ENCODE measurements at regions of chr2 and their contacts with region 1.

Region 1: GRCh38 chr2:100104718-100105677 is 37.4 kb downstream of the AFF3 start:
- DNase-seq: peak in 1 of 2 donors; percentile 78
- ATAC-seq: peak; percentile 32
- H3K4me3 ChIP-seq: peak overlapping the region; percentile 91 to 98
- H3K27ac ChIP-seq: no peak overlapping the region
- H3K4me1 ChIP-seq: peaks cover 0 to 3% of the 10 kb centered on the region in 2 donors
- H3K27me3 ChIP-seq: no peaks in the 10 kb centered on the region

Region 2: DNA sequence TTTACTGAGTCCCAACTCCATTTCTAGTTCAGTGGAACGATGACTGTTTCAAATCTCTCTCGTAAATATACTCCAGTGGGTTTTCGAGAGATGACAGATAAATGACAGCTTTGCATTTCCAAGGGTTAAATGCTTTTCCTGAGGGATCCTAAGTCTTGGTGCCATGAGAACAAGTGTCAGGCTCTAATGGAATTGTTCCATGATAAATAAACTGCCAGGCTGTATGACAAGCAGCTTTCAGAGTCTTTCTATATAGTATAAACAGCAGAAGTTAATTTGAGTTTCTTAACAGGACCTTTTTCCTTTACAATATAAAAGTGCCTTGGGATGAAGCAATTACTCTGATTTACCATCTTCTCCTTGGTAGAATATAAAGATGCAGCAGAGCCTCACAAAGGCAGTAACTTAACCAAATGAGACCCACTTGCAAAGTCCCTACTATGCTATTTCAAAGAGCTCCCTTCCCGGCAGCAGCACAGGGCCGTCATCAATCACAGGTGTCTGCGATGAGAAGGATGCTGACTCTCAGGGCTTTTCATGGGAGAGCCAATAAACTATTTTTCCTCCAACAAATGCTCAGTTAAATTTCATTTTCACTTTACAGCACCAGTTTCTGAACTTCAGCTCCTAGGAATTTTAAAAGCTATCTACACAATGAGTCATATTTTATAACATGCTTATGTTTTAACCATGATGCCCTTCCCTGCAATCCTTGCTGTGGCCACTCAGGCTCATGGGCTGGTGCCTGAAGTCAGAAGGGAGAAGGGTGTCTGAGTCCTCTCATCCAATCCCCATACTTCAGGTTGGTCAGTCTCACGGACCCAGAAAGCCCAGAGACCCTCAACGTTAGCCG is 86.4 kb before region 1 on chr2:
- intact Hi-C with region 1: loop called in 1 of 2 experiments (anchors 5 kb)
- DNase-seq: no peak
- ATAC-seq: no peak
- H3K4me3 ChIP-seq: no peak overlapping the region
- H3K27ac ChIP-seq: no peak overlapping the region
- H3K4me1 ChIP-seq: no peaks in the 10 kb centered on the region
- H3K27me3 ChIP-seq: peaks cover 0 to 2% of the 10 kb centered on the region in 2 donors

Region 3: GRCh38 chr2:100242891-100243619 is 138.1 kb after region 1 on chr2:
- intact Hi-C with region 1: loop called in 1 of 2 experiments (anchors 10 kb)
- DNase-seq: peak; percentile 78 to 89
- ATAC-seq: peak; percentile 68
- H3K4me3 ChIP-seq: no peak overlapping the region
- H3K27ac ChIP-seq: no peak overlapping the region
- H3K4me1 ChIP-seq: no peaks in the 10 kb centered on the region
- H3K27me3 ChIP-seq: no peaks in the 10 kb centered on the region

Measured in aorta (tissue), 5 donors.